CD4-positive, alpha-beta memory T cell (primary cell): ENCODE measurements at regions of chr7 and their contacts with region 1.

Region 1: DNA sequence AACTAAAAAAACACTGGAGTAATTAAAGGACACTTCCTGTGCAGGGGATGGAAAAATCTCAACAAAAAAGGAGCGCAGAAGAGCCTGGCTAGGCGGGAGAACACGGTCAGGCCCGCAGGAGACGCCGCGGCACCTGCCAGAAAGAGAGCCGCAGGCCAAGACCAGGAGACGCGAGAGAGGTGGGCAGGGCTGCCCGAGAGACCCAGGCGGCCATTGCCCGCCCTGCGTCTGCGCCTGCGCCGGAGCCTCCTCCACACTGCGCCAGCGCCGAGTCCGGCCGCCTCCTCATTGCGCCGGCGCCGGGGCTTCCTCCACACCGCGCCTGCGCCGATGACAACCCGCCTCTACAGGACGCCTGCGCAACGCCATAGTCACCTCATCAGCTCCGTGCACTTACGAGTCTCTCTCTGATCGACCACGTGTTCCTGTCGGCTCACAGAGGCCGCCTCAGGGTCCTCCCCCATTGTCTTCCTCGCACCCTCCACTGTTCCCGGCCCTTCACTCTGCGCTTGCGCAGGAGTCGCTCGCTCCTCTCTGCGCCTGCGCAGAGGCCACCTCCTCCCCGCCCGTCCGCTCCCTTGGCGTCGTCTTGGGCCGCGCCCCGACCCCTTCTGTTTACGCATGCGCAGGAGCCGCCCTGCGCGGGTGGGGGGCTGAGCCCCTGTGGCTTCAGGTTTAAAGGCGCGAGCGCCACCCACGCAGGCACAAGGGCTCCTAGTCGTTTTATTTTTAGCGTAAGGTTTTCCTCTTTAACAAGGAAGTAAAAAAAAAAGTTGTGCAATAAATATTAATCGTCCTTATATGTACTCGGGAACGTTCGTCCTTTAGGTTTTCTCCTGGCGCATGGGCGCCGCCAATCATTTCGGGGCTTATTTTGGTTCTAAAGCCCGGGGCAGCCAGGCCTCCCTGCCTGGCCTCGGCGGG is 43.2 kb upstream of the FAM20C start:
- DNase-seq: peak; percentile 98 to 99 (median 99)
- H3K4me3 ChIP-seq: peak overlapping the region; percentile 68 to 77
- H3K4me3 Mint-ChIP-seq: peak overlapping the region; percentile 85 to 94 (median 92)
- H3K27ac ChIP-seq: peak overlapping the region; percentile 81
- H3K27ac Mint-ChIP-seq: peak overlapping the region; percentile 93 to 100 (median 99)
- H3K4me1 ChIP-seq: peaks cover 17% of the 10 kb centered on the region
- H3K4me1 Mint-ChIP-seq: peaks cover 10 to 26% (median 17%) of the 10 kb centered on the region in 4 donors
- H3K27me3 ChIP-seq: no peaks in the 10 kb centered on the region
- H3K27me3 Mint-ChIP-seq: peaks cover 0 to 3% of the 10 kb centered on the region in 2 donors

Region 2: DNA sequence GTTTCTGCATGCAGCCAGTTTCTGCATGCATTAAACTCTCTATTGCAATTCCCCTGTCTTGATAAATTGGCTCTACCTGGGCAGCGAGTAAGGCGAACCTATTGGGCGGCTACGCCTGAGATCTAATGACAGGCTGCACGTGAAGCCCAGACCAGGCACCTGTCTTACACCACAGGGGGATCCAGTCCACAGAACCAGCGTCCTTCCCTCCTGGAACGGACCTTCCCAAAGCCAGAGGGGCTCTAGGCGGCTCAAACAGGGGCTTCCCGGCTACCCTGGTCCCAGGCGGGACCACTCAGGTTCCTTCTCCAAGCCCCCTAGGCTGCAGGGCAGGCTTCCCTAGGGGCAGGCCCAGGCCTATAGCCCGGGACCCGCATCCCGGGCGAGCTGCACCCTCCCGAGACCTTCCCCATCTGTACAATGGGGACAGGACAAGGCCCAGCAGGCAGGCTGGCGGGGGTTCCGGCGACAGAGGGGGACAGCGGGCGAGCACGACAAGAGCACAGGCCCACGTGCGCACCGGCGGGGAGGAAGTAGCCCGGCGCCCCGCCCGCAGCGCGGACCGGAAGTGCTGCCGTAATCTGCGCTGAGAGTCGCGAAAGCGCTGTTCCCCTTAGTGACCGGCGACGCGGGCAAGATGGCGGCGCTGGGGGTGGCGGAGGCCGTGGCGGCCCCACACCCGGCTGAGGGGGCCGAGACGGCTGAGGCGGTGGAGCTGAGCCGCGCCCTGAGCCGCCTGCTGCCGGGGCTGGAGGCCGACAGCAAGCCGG is 577.1 kb after region 1 on chr7 and contains the start of gene DNAAF5:
- CTCF ChIA-PET with region 1: no interaction called
- POLR2A ChIA-PET with region 1: no interaction called
- intact Hi-C with region 1: loop called (anchors 2 kb)
- DNase-seq: peak; percentile 82 to 85 (median 85)
- H3K4me3 ChIP-seq: peak within 1 kb of the TSS; percentile 48 to 52
- H3K4me3 Mint-ChIP-seq: peak within 1 kb of the TSS; percentile 72 to 89 (median 84)
- H3K27ac ChIP-seq: peak within 1 kb of the TSS; percentile 62
- H3K27ac Mint-ChIP-seq: peak within 1 kb of the TSS; percentile 53 to 88 (median 76)
- H3K4me1 ChIP-seq: peaks cover 17% of the 10 kb centered on the region
- H3K4me1 Mint-ChIP-seq: peaks cover 18 to 29% (median 20%) of the 10 kb centered on the region in 4 donors
- H3K27me3 ChIP-seq: no peaks in the 10 kb centered on the region
- H3K27me3 Mint-ChIP-seq: no peaks in the 10 kb centered on the region
- total RNA-seq, gene DNAAF5: 15.9 to 19.4 TPM

Region 3: DNA sequence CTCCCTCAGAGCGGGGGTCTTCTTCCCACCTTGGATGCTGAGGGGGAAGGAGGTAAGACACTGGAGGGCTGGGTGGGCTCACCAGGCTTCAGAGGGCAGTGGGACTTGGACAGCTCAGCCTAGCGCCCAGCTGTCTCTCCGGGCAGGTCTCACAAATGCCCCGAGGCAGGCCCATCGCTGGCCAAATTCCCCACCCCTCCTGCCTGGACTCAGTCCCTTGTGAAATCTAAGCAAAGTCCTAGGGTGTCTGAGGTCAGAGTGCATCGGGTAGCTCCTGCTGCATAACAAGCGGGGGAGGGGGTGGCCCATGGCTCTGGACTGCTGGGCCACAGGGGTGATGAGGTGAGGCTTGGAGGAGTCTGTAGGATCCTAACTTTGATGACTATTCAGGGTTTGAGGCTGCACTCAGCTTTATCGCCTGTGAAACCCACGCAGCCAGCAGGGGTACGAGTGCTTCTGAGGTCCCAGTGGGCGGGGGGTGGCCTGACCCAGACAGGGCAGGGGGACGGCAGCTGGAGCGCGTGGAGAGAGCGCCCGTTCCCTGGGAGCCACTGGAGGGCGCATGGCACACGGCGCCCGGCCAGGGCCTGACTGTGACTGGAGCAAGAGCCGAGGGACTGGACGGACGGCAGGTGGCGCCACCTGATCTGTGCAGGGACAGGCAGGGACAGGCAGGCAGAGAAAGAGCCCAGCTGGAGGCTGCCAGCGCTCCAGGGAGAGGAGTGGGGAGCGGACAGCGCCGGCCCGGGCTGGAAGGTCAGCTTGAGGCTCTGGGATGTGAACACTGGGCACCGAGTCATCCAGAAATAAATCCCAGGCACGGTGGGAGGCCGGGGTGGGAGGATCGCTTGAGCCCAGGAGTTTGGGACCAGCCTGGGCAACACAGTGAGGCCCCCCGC is 843.8 kb after region 1 on chr7:
- CTCF ChIA-PET with region 1: no interaction called
- POLR2A ChIA-PET with region 1: no interaction called
- intact Hi-C with region 1: no loop called
- DNase-seq: peak; percentile 88 to 92 (median 89)
- H3K4me3 ChIP-seq: no peak overlapping the region
- H3K4me3 Mint-ChIP-seq: no peak overlapping the region
- H3K27ac ChIP-seq: no peak overlapping the region
- H3K27ac Mint-ChIP-seq: peak overlapping the region in 2 of 7 donors; percentile 51 to 89
- H3K4me1 ChIP-seq: peaks cover 4% of the 10 kb centered on the region
- H3K4me1 Mint-ChIP-seq: peaks cover 0 to 6% (median 3%) of the 10 kb centered on the region in 4 donors
- H3K27me3 ChIP-seq: no peaks in the 10 kb centered on the region
- H3K27me3 Mint-ChIP-seq: no peaks in the 10 kb centered on the region